Mammary epithelial cell (primary cell): ENCODE measurements at regions of chr12 and their contacts with region 1.

Region 1: GRCh38 chr12:67068761-67069450 is 200.3 kb upstream of the CAND1 start:
- DNase-seq: peak; percentile 83
- H3K4me3 ChIP-seq: peak overlapping the region; percentile 76 to 85 (median 85)
- H3K27ac ChIP-seq: peak overlapping the region; percentile 67
- H3K4me1 ChIP-seq: peaks cover 26% of the 10 kb centered on the region
- H3K27me3 ChIP-seq: no peaks in the 10 kb centered on the region
- CTCF ChIP-seq: no peak

Region 2: GRCh38 chr12:66860752-66861750 is 207.9 kb before region 1 on chr12:
- CTCF ChIA-PET with region 1: no interaction called
- dilution Hi-C with region 1: no loop called
- in situ Hi-C with region 1: no loop called
- intact Hi-C with region 1: loop called (anchors 1 kb)
- DNase-seq: peak; percentile 33
- H3K4me3 ChIP-seq: no peak overlapping the region
- H3K27ac ChIP-seq: no peak overlapping the region
- H3K4me1 ChIP-seq: peaks cover 4% of the 10 kb centered on the region
- H3K27me3 ChIP-seq: no peaks in the 10 kb centered on the region
- CTCF ChIP-seq: peak; percentile 94 to 97

Region 3: DNA sequence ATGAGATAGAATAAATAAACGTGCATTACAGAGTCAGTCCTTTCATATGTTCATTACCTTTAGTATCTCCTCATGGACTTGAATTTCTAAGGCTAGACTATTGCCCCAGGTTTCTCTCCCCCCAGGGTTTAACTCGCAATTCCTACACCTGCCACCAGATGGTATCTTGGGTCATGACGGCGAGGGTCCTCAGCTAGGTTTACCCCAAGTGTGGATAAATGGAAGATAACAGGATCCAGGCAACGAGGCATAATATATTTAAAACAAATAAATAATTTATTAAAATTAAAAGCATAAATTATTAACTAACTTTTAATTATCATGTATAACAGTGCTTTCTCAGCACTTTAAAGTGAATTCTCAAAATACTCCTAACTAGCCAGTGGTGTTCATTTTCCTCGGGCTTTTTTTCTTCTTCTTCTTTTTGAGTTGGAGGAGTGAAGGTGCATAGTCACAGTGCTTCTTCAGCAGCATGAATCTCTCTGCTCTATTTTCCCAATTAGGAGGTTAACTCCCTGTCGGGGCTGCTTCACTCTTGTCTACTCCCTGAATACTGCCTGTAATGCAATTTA is 43.3 kb before region 1 on chr12:
- CTCF ChIA-PET with region 1: no interaction called
- dilution Hi-C with region 1: no loop called
- in situ Hi-C with region 1: no loop called
- intact Hi-C with region 1: loop called (anchors 1 kb)
- DNase-seq: peak; percentile 28
- H3K4me3 ChIP-seq: no peak overlapping the region
- H3K27ac ChIP-seq: no peak overlapping the region
- H3K4me1 ChIP-seq: no peaks in the 10 kb centered on the region
- H3K27me3 ChIP-seq: no peaks in the 10 kb centered on the region
- CTCF ChIP-seq: peak; percentile 77 to 84

Region 4: GRCh38 chr12:67161322-67161918 is 92.5 kb after region 1 on chr12:
- CTCF ChIA-PET with region 1: no interaction called
- dilution Hi-C with region 1: no loop called
- in situ Hi-C with region 1: no loop called
- intact Hi-C with region 1: loop called (anchors 2 kb)
- DNase-seq: peak; percentile 38
- H3K4me3 ChIP-seq: no peak overlapping the region
- H3K27ac ChIP-seq: no peak overlapping the region
- H3K4me1 ChIP-seq: peaks cover under 1% of the 10 kb centered on the region
- H3K27me3 ChIP-seq: no peaks in the 10 kb centered on the region
- CTCF ChIP-seq: peak; percentile 68

Region 5: DNA sequence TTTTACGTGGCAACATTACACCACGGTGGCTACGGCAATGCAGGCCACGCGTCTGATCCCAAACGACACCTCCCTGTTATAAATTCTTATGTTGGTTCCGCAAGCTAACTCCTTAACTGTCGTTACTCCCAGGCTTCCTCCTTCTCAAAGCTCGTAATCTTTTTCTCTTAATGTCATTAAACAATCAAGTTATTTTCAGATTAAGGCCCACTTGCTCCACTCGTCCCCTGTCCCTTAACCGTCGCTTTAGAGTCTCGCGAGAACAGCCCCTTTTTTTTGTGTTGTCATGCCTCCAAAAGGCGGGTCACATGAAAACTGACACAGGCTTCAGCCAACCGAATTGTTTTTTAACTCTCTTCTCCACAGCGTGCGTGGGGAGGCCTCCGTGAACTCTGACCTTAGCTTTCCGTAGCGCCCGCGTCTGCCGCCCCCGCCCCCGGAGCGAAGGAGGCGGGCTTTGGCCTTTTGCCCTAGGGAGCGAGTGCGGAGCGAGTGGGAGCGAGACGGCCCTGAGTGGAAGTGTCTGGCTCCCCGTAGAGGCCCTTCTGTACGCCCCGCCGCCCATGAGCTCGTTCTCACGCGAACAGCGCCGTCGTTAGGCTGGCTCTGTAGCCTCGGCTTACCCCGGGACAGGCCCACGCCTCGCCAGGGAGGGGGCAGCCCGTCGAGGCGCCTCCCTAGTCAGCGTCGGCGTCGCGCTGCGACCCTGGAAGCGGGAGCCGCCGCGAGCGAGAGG is 200.2 kb after region 1 on chr12 and contains the start of gene CAND1:
- CTCF ChIA-PET with region 1: no interaction called
- dilution Hi-C with region 1: no loop called
- in situ Hi-C with region 1: no loop called
- intact Hi-C with region 1: loop called (anchors 2 kb)
- DNase-seq: peak; percentile 99
- H3K4me3 ChIP-seq: peak within 1 kb of the TSS; percentile 89 to 98 (median 95)
- H3K27ac ChIP-seq: peak within 1 kb of the TSS; percentile 97
- H3K4me1 ChIP-seq: peaks cover 10% of the 10 kb centered on the region
- H3K27me3 ChIP-seq: no peaks in the 10 kb centered on the region
- CTCF ChIP-seq: no peak
- total RNA-seq, gene CAND1: 102 to 157 TPM